Colonic mucosa (tissue), 4 donors: ENCODE measurements at regions of chr3 and their contacts with region 1.

Region 1: DNA sequence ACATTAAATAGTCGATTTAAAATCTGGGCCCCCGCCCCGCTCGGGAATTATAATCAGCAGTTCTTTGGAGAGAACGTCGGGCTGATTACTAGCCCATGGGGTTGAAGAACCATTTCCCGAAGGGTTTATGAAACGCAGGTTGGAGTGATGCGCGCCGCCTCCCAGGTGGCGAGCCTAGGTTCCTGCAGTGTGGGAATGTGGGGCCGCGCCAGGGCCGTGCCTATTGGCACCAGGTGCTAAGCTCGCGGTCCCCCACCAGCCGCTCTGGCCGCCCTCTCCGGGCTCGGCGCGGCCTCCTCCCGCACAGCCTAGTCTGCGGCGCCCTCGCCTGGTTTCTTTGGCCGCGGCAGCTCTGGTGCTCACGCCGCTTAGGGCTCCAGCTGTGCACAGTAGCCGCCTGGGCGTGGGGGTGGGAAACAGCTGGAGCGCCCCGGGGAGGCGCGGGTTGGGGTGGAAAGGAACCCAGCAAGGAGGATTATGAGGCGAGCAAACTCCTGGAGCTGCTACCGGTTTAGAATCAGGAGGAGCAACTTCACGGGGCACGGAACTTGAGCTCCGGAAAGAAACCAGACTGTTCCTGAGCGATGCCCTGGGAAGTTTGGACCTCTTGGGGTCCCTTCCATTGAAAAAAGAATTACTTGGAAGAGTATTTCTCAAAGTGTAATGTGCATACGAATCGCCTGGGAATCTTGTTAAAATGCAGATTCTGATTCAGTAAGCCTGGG is 5.6 kb upstream of the MECOM start:
- DNase-seq: peak; percentile 83
- H3K4me3 ChIP-seq: peak overlapping the region; percentile 41
- H3K27ac ChIP-seq: peak overlapping the region; percentile 56
- H3K4me1 ChIP-seq: peaks cover 4% of the 10 kb centered on the region
- H3K27me3 ChIP-seq: peaks cover 35% of the 10 kb centered on the region
- CTCF ChIP-seq: peak; percentile 52

Region 2: GRCh38 chr3:168865022-168865551 is 804.0 kb before region 1 on chr3:
- intact Hi-C with region 1: loop called (anchors 10 kb)
- DNase-seq: peak; percentile 41
- H3K4me3 ChIP-seq: no peak overlapping the region
- H3K27ac ChIP-seq: no peak overlapping the region
- H3K4me1 ChIP-seq: no peaks in the 10 kb centered on the region
- H3K27me3 ChIP-seq: no peaks in the 10 kb centered on the region
- CTCF ChIP-seq: peak; percentile 71

Region 3: GRCh38 chr3:169041677-169042171 is 627.4 kb before region 1 on chr3:
- intact Hi-C with region 1: loop called (anchors 5 kb)
- DNase-seq: no peak
- H3K4me3 ChIP-seq: no peak overlapping the region
- H3K27ac ChIP-seq: no peak overlapping the region
- H3K4me1 ChIP-seq: no peaks in the 10 kb centered on the region
- H3K27me3 ChIP-seq: no peaks in the 10 kb centered on the region
- CTCF ChIP-seq: peak; percentile 36

Region 4: DNA sequence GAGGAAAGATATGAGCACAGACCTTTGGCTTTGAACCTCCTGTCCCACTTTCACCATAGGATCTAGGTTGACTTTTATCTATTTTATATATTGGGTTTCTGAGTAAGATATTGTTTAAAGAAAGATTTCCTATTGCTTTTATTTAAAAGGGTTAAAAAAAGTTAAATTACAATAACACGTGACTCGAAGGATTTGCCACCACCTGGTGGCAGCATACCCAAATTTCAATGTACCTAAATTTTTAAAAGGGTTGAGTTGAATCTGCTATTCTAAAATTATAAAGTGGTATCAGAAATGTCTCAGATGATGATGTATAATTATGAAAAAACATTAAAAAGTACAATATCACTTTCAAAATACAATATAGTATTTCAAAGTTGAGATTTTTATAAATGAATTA is 374.0 kb before region 1 on chr3:
- intact Hi-C with region 1: loop called (anchors 10 kb)
- DNase-seq: peak; percentile 42
- H3K4me3 ChIP-seq: no peak overlapping the region
- H3K27ac ChIP-seq: no peak overlapping the region
- H3K4me1 ChIP-seq: no peaks in the 10 kb centered on the region
- H3K27me3 ChIP-seq: no peaks in the 10 kb centered on the region
- CTCF ChIP-seq: peak; percentile 25